ENCODE measurements at regions of chr3 and their contacts with region 1.

Region 1: GRCh38 chr3:183210839-183211341 is 42.2 kb upstream of the B3GNT5 start:
- DNase-seq: peak; percentile 84 to 93 (median 92)
- H3K4me3 ChIP-seq: peak overlapping the region in 2 of 3 experiments; percentile 12 to 55
- H3K4me3 Mint-ChIP-seq: peak overlapping the region; percentile 32 to 68
- H3K27ac ChIP-seq: peak overlapping the region; percentile 81 to 89
- H3K27ac Mint-ChIP-seq: peak overlapping the region; percentile 95 to 99 (median 96)
- H3K4me1 ChIP-seq: peaks cover 39 to 47% of the 10 kb centered on the region in 2 donors
- H3K4me1 Mint-ChIP-seq: peaks cover 54% of the 10 kb centered on the region
- H3K27me3 ChIP-seq: no peaks in the 10 kb centered on the region
- H3K27me3 Mint-ChIP-seq: peaks cover 0 to 5% (median 0%) of the 10 kb centered on the region in 3 donors
- CTCF ChIP-seq: no peak

Region 2: DNA sequence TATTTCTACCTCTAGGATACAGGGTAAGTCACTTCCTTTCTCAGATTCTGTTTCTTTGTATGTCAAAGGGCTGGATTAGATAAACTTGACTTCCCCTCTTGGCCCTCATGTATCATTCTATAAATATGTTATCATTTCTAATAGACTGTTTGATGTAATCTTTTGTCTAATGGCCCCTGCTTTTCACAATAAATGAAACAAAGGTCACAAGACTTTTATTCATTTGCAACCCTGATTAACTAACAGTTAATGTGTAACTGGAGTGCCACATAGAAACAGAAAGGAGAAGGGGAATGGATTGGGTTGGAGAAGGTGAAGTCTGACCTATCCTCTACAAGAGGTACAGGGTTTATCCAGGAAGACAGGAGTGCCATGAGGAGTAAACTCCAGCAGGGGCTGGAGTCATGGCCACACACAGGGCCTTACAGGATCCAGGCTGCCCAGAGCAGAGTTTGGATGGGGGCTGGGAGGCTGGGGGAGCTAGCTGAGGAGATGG is 34.1 kb after region 1 on chr3:
- intact Hi-C with region 1: loop called in 1 of 2 experiments (anchors 5 kb)
- DNase-seq: peak; percentile 35 to 61 (median 57)
- H3K4me3 ChIP-seq: peak overlapping the region in 1 of 3 experiments; percentile 49
- H3K4me3 Mint-ChIP-seq: peak overlapping the region; percentile 24 to 71
- H3K27ac ChIP-seq: peak overlapping the region; percentile 83 to 88
- H3K27ac Mint-ChIP-seq: peak overlapping the region; percentile 89 to 96 (median 94)
- H3K4me1 ChIP-seq: peaks cover 32 to 37% of the 10 kb centered on the region in 2 donors
- H3K4me1 Mint-ChIP-seq: peaks cover 32% of the 10 kb centered on the region
- H3K27me3 ChIP-seq: no peaks in the 10 kb centered on the region
- H3K27me3 Mint-ChIP-seq: peaks cover 0 to 4% (median 3%) of the 10 kb centered on the region in 3 donors
- CTCF ChIP-seq: no peak

Region 3: DNA sequence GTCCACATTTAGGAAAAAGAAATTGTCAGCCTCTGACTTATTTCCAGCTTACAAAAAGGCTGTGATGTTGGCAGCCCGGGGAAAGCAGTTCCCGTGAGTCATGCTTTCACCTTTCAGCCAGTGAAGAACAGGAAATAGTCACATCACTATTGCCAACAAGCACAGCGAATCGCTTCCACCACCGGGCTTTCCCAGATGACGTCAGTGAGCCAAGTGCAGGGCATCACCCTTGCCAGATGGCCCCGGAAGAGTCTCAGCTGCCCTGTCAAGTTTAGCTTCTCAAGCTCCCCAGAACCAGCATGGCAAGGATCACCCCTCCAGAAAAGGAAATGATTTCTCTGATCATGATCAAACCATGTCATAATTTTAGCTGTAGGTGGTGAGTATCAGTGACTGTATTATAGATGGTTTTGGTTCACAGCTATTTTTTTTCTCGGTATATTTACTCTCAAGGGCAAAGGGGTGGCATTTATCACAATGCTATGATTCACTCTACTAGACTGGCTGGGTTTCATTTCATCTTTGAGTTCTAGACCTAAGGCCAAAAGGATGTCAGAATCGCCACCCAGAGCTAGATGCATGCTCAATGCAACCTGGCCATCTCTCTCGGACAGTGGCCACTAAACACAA is 75.1 kb after region 1 on chr3:
- intact Hi-C with region 1: loop called in 1 of 2 experiments (anchors 2 kb)
- DNase-seq: peak; percentile 97 to 100 (median 99)
- H3K4me3 ChIP-seq: peak overlapping the region in 1 of 3 experiments; percentile 30
- H3K4me3 Mint-ChIP-seq: peak overlapping the region; percentile 48 to 56
- H3K27ac ChIP-seq: peak overlapping the region; percentile 44 to 85
- H3K27ac Mint-ChIP-seq: peak overlapping the region; percentile 87 to 96 (median 93)
- H3K4me1 ChIP-seq: peaks cover 24 to 29% of the 10 kb centered on the region in 2 donors
- H3K4me1 Mint-ChIP-seq: peaks cover 34% of the 10 kb centered on the region
- H3K27me3 ChIP-seq: no peaks in the 10 kb centered on the region
- H3K27me3 Mint-ChIP-seq: peaks cover 0 to 2% (median 1%) of the 10 kb centered on the region in 3 donors
- CTCF ChIP-seq: no peak